Activated CD8-positive, alpha-beta T cell treated with anti-CD3 and anti-CD28 coated beads for 36 hours (primary cell): ENCODE measurements at regions of chr5 and their contacts with region 1.

Region 1: GRCh38 chr5:141811287-141812155 is 66.7 kb downstream of the PCDH1 start:
- DNase-seq: peak; percentile 49
- ATAC-seq: peak; percentile 88
- H3K4me3 Mint-ChIP-seq: no peak overlapping the region
- H3K27ac Mint-ChIP-seq: no peak overlapping the region
- H3K4me1 Mint-ChIP-seq: no peaks in the 10 kb centered on the region
- H3K27me3 Mint-ChIP-seq: peaks cover 38% of the 10 kb centered on the region
- CTCF ChIP-seq: peak; percentile 77

Region 2: GRCh38 chr5:141439411-141440141 is 371.9 kb before region 1 on chr5:
- CTCF ChIA-PET with region 1: no interaction called
- POLR2A ChIA-PET with region 1: no interaction called
- intact Hi-C with region 1: no loop called
- DNase-seq: no peak
- ATAC-seq: no peak
- H3K4me3 Mint-ChIP-seq: no peak overlapping the region
- H3K27ac Mint-ChIP-seq: no peak overlapping the region
- H3K4me1 Mint-ChIP-seq: no peaks in the 10 kb centered on the region
- H3K27me3 Mint-ChIP-seq: peaks cover 12% of the 10 kb centered on the region
- CTCF ChIP-seq: no peak

Region 3: DNA sequence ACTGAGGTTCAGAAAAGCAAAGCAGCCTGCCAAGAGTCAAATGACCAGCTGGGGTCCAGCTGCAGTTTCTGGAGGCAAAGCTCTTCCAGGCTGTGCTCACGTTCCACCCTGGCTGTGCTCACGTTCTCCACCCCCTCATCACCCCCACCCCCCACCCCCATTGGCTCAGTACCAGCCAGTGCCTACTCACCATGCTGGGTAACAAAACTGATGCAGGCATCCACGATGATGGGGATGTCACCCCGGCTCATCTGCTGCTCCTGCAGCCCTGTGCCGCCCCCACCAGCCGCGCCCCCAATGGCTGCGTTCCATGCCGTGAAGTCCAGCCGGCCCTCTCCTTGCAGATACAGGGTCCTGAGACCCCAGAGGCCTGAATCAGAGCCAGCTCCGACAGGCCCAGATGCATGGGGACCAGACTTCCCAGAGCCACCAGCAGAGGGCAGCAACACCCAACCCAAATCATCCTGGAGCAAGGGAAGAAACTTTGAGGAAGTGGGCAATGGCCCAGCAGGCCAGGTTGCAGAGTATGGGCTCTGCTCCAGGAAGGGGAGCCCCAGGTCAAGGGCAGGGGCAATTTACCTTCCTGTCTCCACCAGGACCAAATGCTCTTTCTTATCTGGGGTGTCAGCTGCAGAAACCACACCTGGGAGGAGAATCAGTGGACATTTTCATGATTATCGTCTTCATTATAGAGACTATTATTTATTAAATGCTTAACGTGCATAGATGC is 146.6 kb before region 1 on chr5:
- CTCF ChIA-PET with region 1: interaction called, 13 read pairs
- POLR2A ChIA-PET with region 1: no interaction called
- intact Hi-C with region 1: no loop called
- DNase-seq: peak; percentile 85
- ATAC-seq: peak; percentile 95
- H3K4me3 Mint-ChIP-seq: no peak overlapping the region
- H3K27ac Mint-ChIP-seq: no peak overlapping the region
- H3K4me1 Mint-ChIP-seq: peaks cover 3% of the 10 kb centered on the region
- H3K27me3 Mint-ChIP-seq: no peaks in the 10 kb centered on the region
- CTCF ChIP-seq: peak; percentile 89

Region 4: DNA sequence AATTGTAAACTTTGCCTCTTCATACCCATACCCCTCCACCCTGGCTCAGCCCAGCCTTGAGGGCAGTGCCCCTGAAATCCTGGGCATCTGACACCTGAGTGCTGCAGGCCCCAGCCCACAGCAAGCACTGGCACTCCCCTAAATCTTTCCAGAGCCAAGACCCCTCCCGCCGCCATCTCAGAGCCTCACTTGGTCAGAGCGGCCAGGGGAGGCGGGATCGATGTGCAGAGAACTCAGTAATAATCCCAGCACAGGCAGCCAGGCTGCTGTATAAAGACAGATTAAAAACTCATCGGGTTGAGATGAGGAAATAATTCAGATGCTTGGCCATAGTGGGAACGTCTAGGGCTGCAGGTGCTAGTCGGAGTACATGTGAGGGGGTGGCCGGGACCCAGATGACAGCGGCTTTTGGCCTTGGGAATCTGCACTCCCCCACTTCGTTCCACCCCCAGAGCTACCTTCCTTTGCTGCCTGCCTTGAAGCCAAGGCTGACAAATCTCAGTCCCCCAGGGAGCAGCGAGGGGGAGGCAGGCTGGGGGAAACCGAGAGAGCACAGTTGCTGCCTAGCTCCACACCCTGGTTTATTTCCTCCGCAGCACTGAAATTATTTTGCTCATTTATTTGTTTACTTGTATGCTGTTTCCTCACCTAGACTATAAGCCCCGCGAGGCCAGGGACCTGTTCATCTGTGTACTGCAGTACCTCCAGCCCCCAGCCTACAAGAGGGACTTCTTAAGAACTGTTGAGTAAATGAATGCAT is 110.0 kb before region 1 on chr5:
- CTCF ChIA-PET with region 1: interaction called, 16 read pairs
- POLR2A ChIA-PET with region 1: no interaction called
- intact Hi-C with region 1: loop called (anchors 5 kb)
- DNase-seq: peak; percentile 47
- ATAC-seq: peak; percentile 46
- H3K4me3 Mint-ChIP-seq: peak overlapping the region; percentile 56
- H3K27ac Mint-ChIP-seq: no peak overlapping the region
- H3K4me1 Mint-ChIP-seq: peaks cover 11% of the 10 kb centered on the region
- H3K27me3 Mint-ChIP-seq: peaks cover 32% of the 10 kb centered on the region
- CTCF ChIP-seq: no peak

Region 5: DNA sequence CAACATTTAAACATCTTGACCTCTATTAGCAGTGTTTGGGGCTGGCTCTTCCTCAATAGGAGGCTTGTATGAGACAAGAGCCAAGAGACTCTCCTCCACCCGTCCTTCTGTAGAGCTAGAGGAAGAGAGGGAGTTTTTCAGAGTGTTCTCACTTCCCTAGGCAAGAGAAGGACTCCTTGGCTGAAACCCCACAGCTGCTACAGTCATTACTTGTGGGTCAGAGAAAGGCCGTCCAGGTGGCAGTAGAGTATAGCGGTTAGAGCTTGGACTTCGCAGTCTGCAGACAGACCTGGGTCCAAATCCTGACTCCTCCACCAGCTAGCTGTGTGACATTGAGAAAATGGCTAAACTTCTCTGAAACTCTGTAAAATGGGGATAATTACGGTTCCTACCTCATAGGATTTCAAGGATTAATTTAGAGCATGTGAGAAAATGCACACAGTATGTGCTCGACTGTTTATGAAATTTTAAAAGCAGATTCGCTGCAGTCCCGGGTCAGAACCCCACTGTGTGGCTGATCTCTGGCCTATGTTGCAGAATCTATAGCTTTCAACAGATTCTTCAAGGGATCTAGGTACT is 48.6 kb before region 1 on chr5:
- CTCF ChIA-PET with region 1: interaction called, 6 read pairs
- POLR2A ChIA-PET with region 1: no interaction called
- intact Hi-C with region 1: loop called (anchors 5 kb)
- DNase-seq: no peak
- ATAC-seq: no peak
- H3K4me3 Mint-ChIP-seq: no peak overlapping the region
- H3K27ac Mint-ChIP-seq: no peak overlapping the region
- H3K4me1 Mint-ChIP-seq: no peaks in the 10 kb centered on the region
- H3K27me3 Mint-ChIP-seq: peaks cover 20% of the 10 kb centered on the region
- CTCF ChIP-seq: no peak

Region 6: GRCh38 chr5:141799507-141800167 is 11.9 kb before region 1 on chr5:
- CTCF ChIA-PET with region 1: interaction called, 10 read pairs
- POLR2A ChIA-PET with region 1: no interaction called
- intact Hi-C with region 1: no loop called
- DNase-seq: no peak
- ATAC-seq: no peak
- H3K4me3 Mint-ChIP-seq: no peak overlapping the region
- H3K27ac Mint-ChIP-seq: no peak overlapping the region
- H3K4me1 Mint-ChIP-seq: no peaks in the 10 kb centered on the region
- H3K27me3 Mint-ChIP-seq: peaks cover 10% of the 10 kb centered on the region
- CTCF ChIP-seq: no peak

Region 7: DNA sequence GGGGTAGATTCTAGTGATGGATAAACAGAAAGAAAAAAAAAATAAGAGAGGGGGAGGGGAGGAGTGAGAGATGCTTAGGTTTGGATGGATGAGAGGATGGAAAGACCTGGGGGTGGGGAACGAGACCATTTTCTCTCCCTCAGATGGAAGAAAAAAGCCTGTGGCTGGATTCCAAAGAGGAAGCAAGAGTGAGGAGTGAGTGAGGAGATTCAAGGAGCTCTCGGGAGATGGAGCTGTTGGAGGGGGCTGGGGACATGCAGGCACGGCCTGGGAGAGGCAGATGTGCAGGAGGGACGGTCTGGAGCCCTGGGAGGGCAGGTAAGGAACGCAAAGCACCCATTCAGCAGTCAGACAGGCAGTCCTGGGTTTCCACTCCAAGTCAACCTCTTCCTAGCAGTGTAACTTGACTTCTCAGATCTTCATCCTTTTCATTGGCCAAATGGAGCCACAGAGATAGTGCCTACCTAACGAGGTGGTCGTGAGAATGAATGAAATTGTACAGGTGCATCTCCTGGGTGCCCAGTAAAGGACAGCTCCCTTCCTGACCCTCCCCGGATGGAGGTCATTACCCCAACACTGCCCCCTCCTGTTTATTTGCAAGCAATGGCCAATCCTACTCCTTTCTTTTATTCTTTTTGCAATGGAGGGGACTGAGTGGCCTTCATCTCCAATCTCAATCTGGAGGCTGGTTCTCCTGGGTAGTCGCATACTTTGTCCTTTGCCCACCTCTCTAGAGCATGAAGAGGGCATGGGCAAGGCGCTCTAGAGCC is 14.5 kb after region 1 on chr5:
- CTCF ChIA-PET with region 1: interaction called, 30 read pairs
- POLR2A ChIA-PET with region 1: interaction called, 3 read pairs
- intact Hi-C with region 1: no loop called
- DNase-seq: peak; percentile 20
- ATAC-seq: peak; percentile 53
- H3K4me3 Mint-ChIP-seq: no peak overlapping the region
- H3K27ac Mint-ChIP-seq: no peak overlapping the region
- H3K4me1 Mint-ChIP-seq: no peaks in the 10 kb centered on the region
- H3K27me3 Mint-ChIP-seq: no peaks in the 10 kb centered on the region
- CTCF ChIP-seq: peak; percentile 38